Activated T-helper 1 cell treated with anti-CD3 and anti-CD28 coated beads, Interleukin-12 subunit alpha, Interleukin-12 subunit beta, Interleukin-2, Interleukin-4 antibody, amounts not matched to agents 30 ng/mL and 10 ng/mL and 1 ng/mL, durations not matched to agents 14 hours and 24 hours and 36 hours (primary cell): ENCODE measurements at regions of chr3 and their contacts with region 1.

Region 1: GRCh38 chr3:117019082-117019713 is 309.6 kb downstream of the TUSC7 start:
- DNase-seq: peak; percentile 1
- H3K4me3 Mint-ChIP-seq: no peak overlapping the region
- H3K27ac Mint-ChIP-seq: no peak overlapping the region
- H3K4me1 Mint-ChIP-seq: no peaks in the 10 kb centered on the region
- H3K27me3 Mint-ChIP-seq: peaks cover 4% of the 10 kb centered on the region

Region 2: GRCh38 chr3:117036259-117036799 is 17.1 kb after region 1 on chr3:
- intact Hi-C with region 1: no loop called
- DNase-seq: no peak
- H3K4me3 Mint-ChIP-seq: no peak overlapping the region
- H3K27ac Mint-ChIP-seq: no peak overlapping the region
- H3K4me1 Mint-ChIP-seq: no peaks in the 10 kb centered on the region
- H3K27me3 Mint-ChIP-seq: no peaks in the 10 kb centered on the region

Region 3: GRCh38 chr3:117526470-117527079 is 507.4 kb after region 1 on chr3:
- intact Hi-C with region 1: loop called (anchors 2 kb)
- DNase-seq: no peak
- H3K4me3 Mint-ChIP-seq: no peak overlapping the region
- H3K27ac Mint-ChIP-seq: no peak overlapping the region
- H3K4me1 Mint-ChIP-seq: no peaks in the 10 kb centered on the region
- H3K27me3 Mint-ChIP-seq: no peaks in the 10 kb centered on the region

Region 4: GRCh38 chr3:117719316-117719926 is 700.2 kb after region 1 on chr3:
- intact Hi-C with region 1: loop called (anchors 2 kb)
- DNase-seq: no peak
- H3K4me3 Mint-ChIP-seq: no peak overlapping the region
- H3K27ac Mint-ChIP-seq: no peak overlapping the region
- H3K4me1 Mint-ChIP-seq: no peaks in the 10 kb centered on the region
- H3K27me3 Mint-ChIP-seq: no peaks in the 10 kb centered on the region

Region 5: DNA sequence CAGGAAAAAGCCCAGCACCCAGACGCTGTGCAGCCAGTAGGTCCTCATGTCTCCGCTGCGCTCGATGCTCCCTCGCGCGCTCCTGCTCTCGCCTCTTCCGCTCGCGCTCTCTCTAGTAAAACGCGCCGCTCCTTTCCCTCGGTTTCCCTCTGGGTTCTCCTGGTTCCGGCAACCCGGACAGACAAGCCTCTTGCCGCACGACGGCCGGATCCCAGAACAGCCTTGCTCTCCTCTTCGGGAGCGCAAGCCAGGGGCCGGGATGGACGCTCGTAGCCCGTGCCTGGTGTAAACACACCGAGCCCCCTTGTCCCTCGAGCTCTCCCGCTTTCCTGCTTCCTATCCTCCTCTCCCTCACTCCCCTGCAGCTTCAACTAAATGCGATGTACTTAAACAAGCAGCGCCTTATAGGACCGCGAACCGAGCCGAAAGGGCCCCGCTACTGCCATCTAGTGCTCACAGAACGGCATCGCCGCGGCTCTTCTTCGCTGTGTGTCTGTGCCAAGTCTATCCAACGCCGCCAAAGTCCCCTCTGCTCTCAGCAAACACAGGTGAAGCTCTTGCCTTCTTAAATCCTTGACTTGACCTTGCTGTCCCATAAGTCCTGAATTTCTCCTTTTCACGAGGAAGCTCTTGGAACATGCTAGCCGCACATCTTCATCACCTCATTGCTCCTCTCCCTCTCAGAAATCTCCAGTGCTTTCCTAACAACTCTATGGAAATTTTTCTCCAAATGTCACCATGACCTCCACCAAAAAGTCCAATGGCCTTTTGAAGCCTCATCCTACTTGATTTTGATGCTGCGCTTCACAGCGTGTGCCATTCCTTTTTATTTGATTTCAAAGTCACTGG is 978.2 kb after region 1 on chr3:
- intact Hi-C with region 1: loop called (anchors 2 kb)
- DNase-seq: peak; percentile 32
- H3K4me3 Mint-ChIP-seq: no peak overlapping the region
- H3K27ac Mint-ChIP-seq: no peak overlapping the region
- H3K4me1 Mint-ChIP-seq: no peaks in the 10 kb centered on the region
- H3K27me3 Mint-ChIP-seq: peaks cover 5% of the 10 kb centered on the region